ENCODE measurements at regions of chr5 and their contacts with region 1.

Region 1: DNA sequence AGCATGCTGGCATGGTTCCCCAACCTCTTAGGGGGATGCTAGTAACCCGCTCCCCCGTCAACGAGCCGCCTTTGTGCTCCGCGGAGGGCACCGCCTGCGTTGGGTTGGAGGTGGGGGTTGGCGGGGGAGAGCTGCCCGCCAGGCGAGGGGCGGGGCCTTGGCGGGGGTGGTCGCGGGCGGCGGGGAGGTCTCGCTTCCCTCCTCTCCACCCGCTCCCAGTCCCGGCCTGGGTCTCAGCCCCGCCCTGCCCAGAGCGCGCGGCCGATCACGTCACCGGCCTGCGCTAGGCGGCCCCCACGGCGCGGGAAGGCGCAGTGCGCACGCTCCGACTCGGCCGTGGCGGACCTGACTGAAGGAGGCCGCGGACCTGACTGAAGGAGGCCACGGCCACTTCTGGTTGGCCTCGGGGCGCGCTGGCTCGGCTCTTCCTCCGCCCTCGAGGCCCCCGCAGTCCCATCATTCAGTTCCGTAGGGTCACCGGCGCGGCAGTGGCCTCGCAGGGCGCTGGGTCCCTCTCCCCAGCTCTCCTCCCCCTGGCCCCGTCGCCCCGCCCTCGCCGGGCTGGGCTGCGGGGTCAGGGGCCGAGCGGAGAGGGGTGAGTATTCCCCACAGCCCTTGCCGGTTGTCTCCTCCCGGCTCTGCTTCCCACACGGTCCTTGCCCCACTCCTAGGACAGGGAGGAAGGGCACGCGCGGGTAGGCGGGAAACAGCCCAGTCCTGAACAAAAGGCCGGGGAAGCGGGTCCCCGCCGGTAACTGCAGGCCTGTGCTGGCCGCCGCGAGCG is at the start of gene ATG10:
- DNase-seq: peak; percentile 93 to 97 (median 94)
- ATAC-seq: peak; percentile 96 to 100 (median 99)
- H3K4me3 ChIP-seq: peak within 1 kb of the TSS; percentile 57 to 92 (median 73)
- H3K27ac ChIP-seq: peak within 1 kb of the TSS; percentile 91 to 100 (median 98)
- H3K4me1 ChIP-seq: peaks cover 0 to 15% (median 6%) of the 10 kb centered on the region in 12 donors
- H3K27me3 ChIP-seq: no peaks in the 10 kb centered on the region
- CTCF ChIP-seq: no peak
- POLR2A ChIP-seq: peak; percentile 70 to 98
- total RNA-seq, gene ATG10: 2.7 to 10.7 (median 6.3) TPM

Region 2: DNA sequence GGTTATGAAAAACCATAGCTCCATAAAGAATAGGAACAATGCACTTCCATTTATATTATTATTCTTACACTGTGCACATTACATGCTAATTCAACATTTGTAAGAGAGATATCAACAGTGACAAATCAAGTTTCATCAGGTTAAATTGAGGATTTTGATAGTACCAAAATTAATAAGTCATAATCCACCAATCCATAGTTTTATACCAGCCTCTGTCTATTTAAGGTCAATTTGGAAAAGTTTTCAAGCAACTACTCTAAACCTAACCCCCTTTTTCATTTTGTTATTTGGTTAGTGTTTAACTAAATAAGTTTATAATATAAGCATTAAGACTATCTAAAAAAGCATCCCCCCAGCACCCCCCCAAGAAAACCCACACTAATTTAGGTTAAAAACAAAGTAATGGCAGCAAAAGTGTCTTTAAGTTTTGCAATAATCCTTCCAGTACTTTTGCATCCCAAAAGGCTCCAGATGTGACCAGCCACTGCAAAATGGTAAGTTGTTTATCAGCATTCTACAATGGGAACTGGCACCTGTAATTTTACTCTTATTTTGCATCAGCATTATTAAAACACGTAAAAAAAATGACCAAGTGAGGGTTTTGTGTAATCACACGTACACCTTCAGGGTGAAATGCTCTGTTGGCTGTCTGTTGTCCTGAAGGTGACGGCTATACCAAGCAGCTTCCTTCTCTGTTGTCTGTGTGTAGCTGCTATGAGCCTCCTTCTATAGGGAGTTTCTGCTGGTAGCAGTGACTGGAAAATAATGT is 184.2 kb before region 1 on chr5:
- intact Hi-C with region 1: loop called in 1 of 10 experiments (anchors 5 kb)
- DNase-seq: peak in 4 of 5 donors; percentile 53 to 78 (median 66)
- ATAC-seq: peak; percentile 60 to 72 (median 63)
- H3K4me3 ChIP-seq: peak overlapping the region in 3 of 12 donors; percentile 4 to 30 (median 20)
- H3K27ac ChIP-seq: peak overlapping the region in 9 of 12 donors; percentile 11 to 42 (median 21)
- H3K4me1 ChIP-seq: peaks cover 0 to 30% (median 19%) of the 10 kb centered on the region in 12 donors
- H3K27me3 ChIP-seq: no peaks in the 10 kb centered on the region
- CTCF ChIP-seq: no peak
- POLR2A ChIP-seq: no peak

Region 3: GRCh38 chr5:81856948-81857928 is 114.7 kb before region 1 on chr5:
- intact Hi-C with region 1: loop called in 9 of 10 experiments (anchors 2 to 10 kb)
- DNase-seq: peak; percentile 86 to 94 (median 88)
- ATAC-seq: peak; percentile 95 to 96 (median 96)
- H3K4me3 ChIP-seq: peak overlapping the region in 6 of 12 donors; percentile 9 to 37 (median 24)
- H3K27ac ChIP-seq: peak overlapping the region; percentile 64 to 90 (median 74)
- H3K4me1 ChIP-seq: peaks cover 0 to 55% (median 22%) of the 10 kb centered on the region in 12 donors
- H3K27me3 ChIP-seq: no peaks in the 10 kb centered on the region
- CTCF ChIP-seq: peak in 10 of 12 donors; percentile 4 to 48 (median 23)
- POLR2A ChIP-seq: no peak

Region 4: DNA sequence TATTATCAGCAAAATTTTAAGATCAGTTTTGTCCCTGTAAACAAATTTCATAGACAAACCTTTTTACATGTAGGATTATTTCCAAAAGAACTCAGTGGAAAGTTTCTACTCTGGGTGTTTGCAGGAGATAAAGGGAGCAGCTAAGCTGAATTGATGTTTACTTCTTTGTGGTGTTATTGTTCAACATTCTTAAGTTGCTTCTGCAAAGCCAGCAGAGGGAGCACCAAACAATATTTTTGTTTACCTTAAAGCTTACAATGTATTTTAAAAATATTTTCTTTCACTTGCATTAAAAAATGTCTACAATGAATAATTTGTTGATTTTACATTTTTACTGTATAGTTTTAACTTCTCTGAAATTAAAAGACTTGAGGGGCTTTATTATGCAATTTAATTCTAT is 135.4 kb after region 1 on chr5:
- intact Hi-C with region 1: loop called in 1 of 10 experiments (anchors 5 kb)
- DNase-seq: no peak
- ATAC-seq: no peak
- H3K4me3 ChIP-seq: no peak overlapping the region
- H3K27ac ChIP-seq: peak overlapping the region in 1 of 12 donors; percentile 46
- H3K4me1 ChIP-seq: peaks cover 0 to 25% (median 16%) of the 10 kb centered on the region in 12 donors
- H3K27me3 ChIP-seq: no peaks in the 10 kb centered on the region
- CTCF ChIP-seq: peak in 10 of 12 donors; percentile 15 to 61 (median 46)
- POLR2A ChIP-seq: no peak

Region 5: GRCh38 chr5:82278095-82278918 is 306.4 kb after region 1 on chr5 and contains the start of gene RPS23:
- intact Hi-C with region 1: loop called in 1 of 10 experiments (anchors 5 kb)
- DNase-seq: peak; percentile 90 to 95 (median 93)
- ATAC-seq: peak; percentile 96 to 98 (median 96)
- H3K4me3 ChIP-seq: peak within 1 kb of the TSS; percentile 64 to 99 (median 87)
- H3K27ac ChIP-seq: peak within 1 kb of the TSS; percentile 75 to 92 (median 90)
- H3K4me1 ChIP-seq: peaks cover 0 to 29% (median 14%) of the 10 kb centered on the region in 12 donors
- H3K27me3 ChIP-seq: no peaks in the 10 kb centered on the region
- CTCF ChIP-seq: no peak
- POLR2A ChIP-seq: peak in 1 of 2 donors; percentile 73
- total RNA-seq, gene RPS23: 969 to 1,672 (median 1,220) TPM